ENCODE measurements at regions of chr1 and their contacts with region 1.

Region 1: GRCh38 chr1:153633716-153634665 is at the start of gene CHTOP:
- DNase-seq: peak; percentile 96 to 99 (median 96)
- ATAC-seq: peak; percentile 95
- H3K4me3 ChIP-seq: peak within 1 kb of the TSS; percentile 99
- H3K4me3 Mint-ChIP-seq: peak within 1 kb of the TSS; percentile 97 to 100 (median 99)
- H3K27ac ChIP-seq: peak within 1 kb of the TSS; percentile 98
- H3K27ac Mint-ChIP-seq: peak within 1 kb of the TSS; percentile 98 to 100 (median 100)
- H3K4me1 ChIP-seq: peaks cover 11 to 25% of the 10 kb centered on the region in 2 donors
- H3K4me1 Mint-ChIP-seq: peaks cover 30 to 52% (median 41%) of the 10 kb centered on the region in 7 donors
- H3K27me3 ChIP-seq: no peaks in the 10 kb centered on the region
- H3K27me3 Mint-ChIP-seq: peaks cover 0 to 3% (median 0%) of the 10 kb centered on the region in 5 donors
- total RNA-seq, gene CHTOP: 85.2 to 143 (median 116) TPM

Region 2: GRCh38 chr1:153365303-153366095 is 268.5 kb before region 1 on chr1:
- CTCF ChIA-PET with region 1: no interaction called
- POLR2A ChIA-PET with region 1: no interaction called
- intact Hi-C with region 1: no loop called
- DNase-seq: no peak
- ATAC-seq: peak; percentile 37
- H3K4me3 ChIP-seq: no peak overlapping the region
- H3K4me3 Mint-ChIP-seq: no peak overlapping the region
- H3K27ac ChIP-seq: no peak overlapping the region
- H3K27ac Mint-ChIP-seq: no peak overlapping the region
- H3K4me1 ChIP-seq: no peaks in the 10 kb centered on the region
- H3K4me1 Mint-ChIP-seq: peaks cover 0 to 11% (median 0%) of the 10 kb centered on the region in 7 donors
- H3K27me3 ChIP-seq: no peaks in the 10 kb centered on the region
- H3K27me3 Mint-ChIP-seq: peaks cover 0 to 12% (median 5%) of the 10 kb centered on the region in 5 donors

Region 3: GRCh38 chr1:153545067-153546055 is 88.6 kb before region 1 on chr1 and contains the start of gene S100A4:
- CTCF ChIA-PET with region 1: no interaction called
- POLR2A ChIA-PET with region 1: interaction called, 13 read pairs
- intact Hi-C with region 1: loop called (anchors 2 kb)
- DNase-seq: peak; percentile 50 to 93 (median 89)
- ATAC-seq: peak; percentile 84
- H3K4me3 ChIP-seq: peak within 1 kb of the TSS; percentile 69
- H3K4me3 Mint-ChIP-seq: peak within 1 kb of the TSS; percentile 85 to 97 (median 88)
- H3K27ac ChIP-seq: peak within 1 kb of the TSS; percentile 79
- H3K27ac Mint-ChIP-seq: peak within 1 kb of the TSS; percentile 93 to 99 (median 98)
- H3K4me1 ChIP-seq: peaks cover 53 to 69% of the 10 kb centered on the region in 2 donors
- H3K4me1 Mint-ChIP-seq: peaks cover 62 to 87% (median 74%) of the 10 kb centered on the region in 7 donors
- H3K27me3 ChIP-seq: no peaks in the 10 kb centered on the region
- H3K27me3 Mint-ChIP-seq: no peaks in the 10 kb centered on the region
- total RNA-seq, gene S100A4: 54.0 to 766 (median 204) TPM

Region 4: GRCh38 chr1:153649863-153650235 is 15.9 kb after region 1 on chr1:
- CTCF ChIA-PET with region 1: interaction called, 4 read pairs
- POLR2A ChIA-PET with region 1: interaction called, 99 read pairs
- intact Hi-C with region 1: no loop called
- DNase-seq: peak in 2 of 9 donors; percentile 23 to 33
- ATAC-seq: no peak
- H3K4me3 ChIP-seq: no peak overlapping the region
- H3K4me3 Mint-ChIP-seq: peak overlapping the region in 9 of 10 donors; percentile 67 to 85 (median 80)
- H3K27ac ChIP-seq: peak overlapping the region; percentile 69
- H3K27ac Mint-ChIP-seq: peak overlapping the region; percentile 56 to 96 (median 92)
- H3K4me1 ChIP-seq: peaks cover 7 to 28% of the 10 kb centered on the region in 2 donors
- H3K4me1 Mint-ChIP-seq: peaks cover 26 to 57% (median 52%) of the 10 kb centered on the region in 7 donors
- H3K27me3 ChIP-seq: no peaks in the 10 kb centered on the region
- H3K27me3 Mint-ChIP-seq: no peaks in the 10 kb centered on the region

Region 5: GRCh38 chr1:153658400-153659174 is 24.6 kb after region 1 on chr1 and contains the start of gene SNAPIN:
- CTCF ChIA-PET with region 1: interaction called, 4 read pairs
- POLR2A ChIA-PET with region 1: interaction called, 16 read pairs
- intact Hi-C with region 1: loop called (anchors 1 kb)
- DNase-seq: peak; percentile 81 to 94 (median 88)
- ATAC-seq: peak; percentile 98
- H3K4me3 ChIP-seq: peak within 1 kb of the TSS; percentile 93
- H3K4me3 Mint-ChIP-seq: peak within 1 kb of the TSS; percentile 91 to 97 (median 94)
- H3K27ac ChIP-seq: peak within 1 kb of the TSS; percentile 90
- H3K27ac Mint-ChIP-seq: peak within 1 kb of the TSS; percentile 90 to 98 (median 91)
- H3K4me1 ChIP-seq: peaks cover 9 to 13% of the 10 kb centered on the region in 2 donors
- H3K4me1 Mint-ChIP-seq: peaks cover 8 to 26% (median 14%) of the 10 kb centered on the region in 7 donors
- H3K27me3 ChIP-seq: no peaks in the 10 kb centered on the region
- H3K27me3 Mint-ChIP-seq: no peaks in the 10 kb centered on the region
- total RNA-seq, gene SNAPIN: 10.2 to 43.5 (median 29.8) TPM

Region 6: GRCh38 chr1:153698020-153698931 is 64.3 kb after region 1 on chr1:
- CTCF ChIA-PET with region 1: no interaction called
- POLR2A ChIA-PET with region 1: no interaction called
- intact Hi-C with region 1: no loop called
- DNase-seq: no peak
- ATAC-seq: peak; percentile 37
- H3K4me3 ChIP-seq: no peak overlapping the region
- H3K4me3 Mint-ChIP-seq: peak overlapping the region in 4 of 10 donors; percentile 33 to 55 (median 48)
- H3K27ac ChIP-seq: no peak overlapping the region
- H3K27ac Mint-ChIP-seq: peak overlapping the region in 1 of 9 donors; percentile 53
- H3K4me1 ChIP-seq: no peaks in the 10 kb centered on the region
- H3K4me1 Mint-ChIP-seq: peaks cover 0 to 3% (median 0%) of the 10 kb centered on the region in 7 donors
- H3K27me3 ChIP-seq: no peaks in the 10 kb centered on the region
- H3K27me3 Mint-ChIP-seq: no peaks in the 10 kb centered on the region